ENCODE measurements at regions of chr2 and their contacts with region 1.

Region 1: GRCh38 chr2:70301344-70302194 is at the start of gene FAM136A:
- DNase-seq: peak; percentile 94
- ATAC-seq: peak; percentile 76
- H3K4me3 Mint-ChIP-seq: peak within 1 kb of the TSS; percentile 84
- H3K27ac Mint-ChIP-seq: peak within 1 kb of the TSS; percentile 89
- H3K4me1 Mint-ChIP-seq: peaks cover 19% of the 10 kb centered on the region
- H3K27me3 Mint-ChIP-seq: peaks cover 5% of the 10 kb centered on the region; the same call in 1 of the 2 replicates
- CTCF ChIP-seq: peak; percentile 98
- total RNA-seq, gene FAM136A: 81.0 to 83.9 TPM (median 81.4 TPM) in 3 replicates

Region 2: GRCh38 chr2:70321370-70321769 is 19.8 kb after region 1 on chr2:
- CTCF ChIA-PET with region 1: interaction called, 10 read pairs
- POLR2A ChIA-PET with region 1: no interaction called
- DNase-seq: no peak
- ATAC-seq: no peak
- H3K4me3 Mint-ChIP-seq: no peak overlapping the region
- H3K27ac Mint-ChIP-seq: no peak overlapping the region
- H3K4me1 Mint-ChIP-seq: no peaks in the 10 kb centered on the region
- H3K27me3 Mint-ChIP-seq: peaks cover 44% of the 10 kb centered on the region
- CTCF ChIP-seq: no peak

Region 3: DNA sequence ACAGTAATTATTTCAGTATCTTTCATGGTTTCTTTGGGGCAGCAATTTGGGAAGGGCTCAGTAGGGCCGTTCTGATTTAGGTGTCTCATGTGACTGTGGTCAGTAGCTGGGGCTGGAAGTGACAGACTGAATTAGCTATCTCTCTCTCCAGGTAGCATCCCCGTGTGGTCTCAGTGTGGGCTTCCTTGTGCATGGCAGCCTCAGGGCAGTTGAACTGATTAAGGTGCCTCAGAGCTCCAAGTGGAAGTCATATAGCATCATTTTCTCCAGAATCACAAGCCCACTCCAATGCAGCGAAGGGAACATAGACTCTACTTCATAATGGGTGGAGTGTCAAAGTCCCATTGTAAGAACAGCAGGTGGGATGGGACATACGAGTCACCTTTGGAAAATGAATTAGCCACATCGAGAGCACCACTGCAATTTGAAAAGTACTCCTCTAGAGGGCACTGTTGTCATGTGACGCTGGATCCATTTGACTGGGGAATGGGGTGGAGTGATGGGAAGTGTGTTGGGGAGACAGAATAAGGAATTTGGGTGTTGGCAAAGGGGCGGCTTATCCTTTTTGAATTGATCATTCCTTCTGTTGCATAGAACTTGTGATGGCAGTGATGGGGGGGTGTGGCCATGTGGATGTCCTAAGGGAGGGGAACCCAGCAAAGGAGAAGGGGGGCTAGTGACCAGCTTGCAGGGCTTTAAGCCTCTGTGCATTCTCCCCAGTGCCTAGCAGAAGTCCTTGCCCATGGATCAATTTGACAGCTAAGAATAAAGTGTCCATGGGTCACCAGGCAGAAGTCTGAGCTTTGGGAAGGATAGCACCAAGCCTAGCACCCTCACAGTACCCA is 39.6 kb after region 1 on chr2:
- CTCF ChIA-PET with region 1: interaction called, 13 read pairs
- POLR2A ChIA-PET with region 1: no interaction called
- DNase-seq: peak; percentile 53
- ATAC-seq: peak; percentile 91
- H3K4me3 Mint-ChIP-seq: no peak overlapping the region
- H3K27ac Mint-ChIP-seq: no peak overlapping the region
- H3K4me1 Mint-ChIP-seq: no peaks in the 10 kb centered on the region
- H3K27me3 Mint-ChIP-seq: peaks cover 64% of the 10 kb centered on the region
- CTCF ChIP-seq: peak; percentile 66

Region 4: GRCh38 chr2:70616168-70616694 is 314.7 kb after region 1 on chr2:
- CTCF ChIA-PET with region 1: interaction called, 26 read pairs
- POLR2A ChIA-PET with region 1: no interaction called
- DNase-seq: no peak
- ATAC-seq: no peak
- H3K4me3 Mint-ChIP-seq: no peak overlapping the region
- H3K27ac Mint-ChIP-seq: no peak overlapping the region
- H3K4me1 Mint-ChIP-seq: peaks cover 40% of the 10 kb centered on the region
- H3K27me3 Mint-ChIP-seq: no peaks in the 10 kb centered on the region; the same call in 1 of the 2 replicates
- CTCF ChIP-seq: no peak

Region 5: DNA sequence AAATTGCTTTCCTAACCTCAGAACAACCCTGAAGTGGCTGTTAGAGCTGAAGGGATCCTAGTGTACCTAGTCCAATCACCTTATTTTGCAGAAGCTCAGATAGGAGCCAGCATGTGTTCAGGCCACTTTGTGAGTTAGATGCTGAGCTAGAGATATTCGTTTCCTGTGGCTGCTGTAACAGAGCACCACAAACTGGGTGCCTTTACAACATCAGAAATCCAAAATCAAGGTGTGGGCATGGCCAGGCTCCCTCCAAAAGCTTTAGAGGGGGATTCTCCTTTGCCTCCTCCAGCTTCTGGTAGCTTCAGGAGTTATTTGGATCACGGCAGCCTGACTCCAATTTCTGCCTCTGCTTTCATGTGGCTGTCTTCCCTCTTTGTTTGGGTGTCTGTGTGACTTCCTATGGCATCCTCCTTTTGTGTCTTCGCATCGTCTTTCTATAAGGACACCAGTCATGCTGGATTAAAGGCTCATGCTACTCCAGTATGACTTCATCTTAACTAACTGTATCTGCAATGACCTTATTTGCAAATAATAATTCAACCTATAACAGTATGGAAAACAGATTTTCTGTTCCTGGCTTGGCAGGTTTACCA is 338.4 kb after region 1 on chr2:
- CTCF ChIA-PET with region 1: interaction called, 61 read pairs
- POLR2A ChIA-PET with region 1: interaction called, 3 read pairs
- DNase-seq: no peak
- ATAC-seq: no peak
- H3K4me3 Mint-ChIP-seq: no peak overlapping the region
- H3K27ac Mint-ChIP-seq: no peak overlapping the region
- H3K4me1 Mint-ChIP-seq: peaks cover 2% of the 10 kb centered on the region
- H3K27me3 Mint-ChIP-seq: peaks cover 9% of the 10 kb centered on the region
- CTCF ChIP-seq: no peak

Measured in WTC11 (cell line).